ENCODE measurements at regions of chr9 and their contacts with region 1.

Region 1: DNA sequence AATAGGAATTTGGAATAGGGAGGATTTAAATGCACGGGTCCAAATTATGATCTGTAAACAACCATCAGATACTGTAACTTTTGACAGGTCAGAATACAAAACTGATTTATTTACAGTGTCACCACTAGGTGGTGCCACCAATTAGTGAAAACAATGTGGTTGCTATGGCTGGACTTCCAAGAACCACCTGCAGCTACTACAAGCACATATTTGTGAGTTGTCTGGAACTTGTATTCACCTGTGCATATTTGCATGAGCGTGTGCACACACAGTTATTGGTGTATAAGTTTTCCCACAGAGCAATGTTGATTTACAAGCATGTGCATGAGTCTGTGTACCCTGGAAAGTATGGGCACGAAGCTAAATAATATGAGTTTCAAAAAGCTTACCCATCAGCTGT is 3.0 kb upstream of the HRCT1 start:
- DNase-seq: no peak
- ATAC-seq: no peak

Region 2: DNA sequence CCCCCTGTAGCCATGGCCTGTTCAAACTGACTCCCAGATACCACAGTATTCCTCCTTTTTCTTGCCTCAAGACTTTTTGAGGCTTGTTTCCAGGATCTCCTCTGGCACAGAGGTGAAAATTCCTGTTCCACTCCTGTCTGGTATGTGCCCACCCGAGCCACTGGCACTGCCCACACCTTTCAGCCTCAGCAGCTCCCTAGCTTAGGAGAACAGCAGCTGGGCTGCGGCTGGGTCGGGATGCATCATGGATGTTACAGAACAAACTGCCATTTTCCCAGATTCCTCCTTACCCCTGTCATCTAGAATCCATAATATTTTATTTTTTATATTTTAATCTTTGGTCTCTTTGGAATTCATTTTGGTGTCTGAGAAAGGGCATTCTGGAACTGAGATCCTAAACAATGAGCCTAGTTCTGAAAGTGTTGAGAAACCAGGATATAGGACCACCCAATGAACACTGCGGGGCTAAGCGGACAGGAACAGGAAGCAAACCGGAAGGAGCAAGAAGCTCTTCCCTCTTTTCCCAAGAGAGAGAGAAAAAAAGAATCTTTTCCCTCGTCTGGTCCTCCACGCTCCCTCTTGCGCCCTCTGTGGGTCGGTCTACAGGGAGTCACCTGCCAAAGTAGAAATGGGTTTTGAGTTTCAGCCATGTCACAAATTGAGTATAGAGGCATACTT is 42.4 kb after region 1 on chr9:
- intact Hi-C with region 1: loop called (anchors 2 kb)
- DNase-seq: peak; percentile 90
- ATAC-seq: peak; percentile 85

Region 3: DNA sequence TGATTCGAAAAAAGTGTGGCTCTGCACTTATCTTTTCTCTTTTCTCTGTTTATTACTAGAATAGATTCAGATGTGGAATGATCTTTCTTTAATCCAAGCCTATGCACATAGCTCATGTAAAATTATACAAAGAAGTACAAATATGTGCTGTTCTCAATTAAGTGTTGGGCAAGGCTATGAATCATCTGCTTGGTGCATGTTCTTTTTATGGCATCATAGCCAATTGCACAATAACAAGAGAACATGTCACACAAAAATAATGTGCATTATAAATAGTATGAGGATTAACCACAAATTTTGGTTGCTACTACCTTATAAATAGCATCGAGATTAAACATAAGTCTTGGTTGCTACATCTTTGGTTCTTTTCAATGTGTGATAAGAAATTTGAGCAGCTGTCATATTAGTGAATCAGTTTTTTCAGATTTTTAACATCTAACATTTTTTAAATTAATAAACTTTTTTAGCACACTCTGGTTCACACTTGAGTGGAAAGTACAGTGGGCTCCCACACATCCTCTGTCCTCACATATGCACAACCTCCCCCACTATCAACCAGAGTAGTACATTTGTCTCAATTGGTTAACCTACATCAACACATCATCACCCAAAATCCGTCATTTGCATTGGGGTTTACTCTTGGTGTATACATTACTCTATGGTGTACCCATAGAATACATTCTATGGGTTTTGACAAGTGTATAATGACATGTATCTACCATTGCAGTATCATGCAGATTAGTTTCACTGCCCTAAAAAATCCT is 126.9 kb after region 1 on chr9:
- intact Hi-C with region 1: loop called (anchors 5 kb)
- DNase-seq: no peak
- ATAC-seq: peak; percentile 88

Measured in left ventricle myocardium superior (tissue), 1 donor.